Heart right ventricle (tissue), 16 donors: ENCODE measurements at regions of chr1 and their contacts with region 1.

Region 1: GRCh38 chr1:208177656-208178055 is 66.5 kb downstream of the PLXNA2 start:
- DNase-seq: no peak
- ATAC-seq: no peak
- H3K4me3 ChIP-seq: no peak overlapping the region
- H3K27ac ChIP-seq: no peak overlapping the region
- H3K4me1 ChIP-seq: peaks cover 26 to 84% (median 56%) of the 10 kb centered on the region in 9 donors
- H3K27me3 ChIP-seq: no peaks in the 10 kb centered on the region
- CTCF ChIP-seq: no peak

Region 2: GRCh38 chr1:208081972-208082371 is 95.7 kb before region 1 on chr1:
- intact Hi-C with region 1: no loop called
- DNase-seq: no peak
- ATAC-seq: peak in 1 of 8 donors; percentile 26
- H3K4me3 ChIP-seq: no peak overlapping the region
- H3K27ac ChIP-seq: peak overlapping the region in 2 of 10 donors; percentile 5 to 41
- H3K4me1 ChIP-seq: peaks cover 0 to 67% (median 23%) of the 10 kb centered on the region in 9 donors
- H3K27me3 ChIP-seq: no peaks in the 10 kb centered on the region
- CTCF ChIP-seq: peak in 5 of 9 donors; percentile 14 to 41 (median 26)

Region 3: GRCh38 chr1:208159555-208160258 is 17.9 kb before region 1 on chr1:
- intact Hi-C with region 1: loop called in 1 of 10 experiments (anchors 2 kb)
- DNase-seq: no peak
- ATAC-seq: peak in 7 of 8 donors; percentile 31 to 50 (median 45)
- H3K4me3 ChIP-seq: no peak overlapping the region
- H3K27ac ChIP-seq: peak overlapping the region in 9 of 10 donors; percentile 9 to 79 (median 41)
- H3K4me1 ChIP-seq: peaks cover 36 to 99% (median 86%) of the 10 kb centered on the region in 9 donors
- H3K27me3 ChIP-seq: no peaks in the 10 kb centered on the region
- CTCF ChIP-seq: no peak